BJ (cell line): ENCODE measurements at regions of chr13 and their contacts with region 1.

Region 1: GRCh38 chr13:112873851-112874750 is 94.9 kb upstream of the MCF2L start:
- DNase-seq: no peak
- H3K4me3 ChIP-seq: no peak overlapping the region
- H3K27me3 ChIP-seq: no peaks in the 10 kb centered on the region
- CTCF ChIP-seq: peak; percentile 95

Region 2: GRCh38 chr13:112606109-112607001 is 267.7 kb before region 1 on chr13:
- CTCF ChIA-PET with region 1: interaction called, 14 read pairs
- POLR2A ChIA-PET with region 1: no interaction called
- DNase-seq: peak; percentile 25
- H3K4me3 ChIP-seq: peak overlapping the region; percentile 44
- H3K27me3 ChIP-seq: peaks cover 1% of the 10 kb centered on the region; the same call in 1 of the 2 replicates
- CTCF ChIP-seq: peak; percentile 74

Region 3: GRCh38 chr13:112616586-112617362 is 257.3 kb before region 1 on chr13:
- CTCF ChIA-PET with region 1: interaction called, 30 read pairs
- POLR2A ChIA-PET with region 1: no interaction called
- DNase-seq: no peak
- H3K4me3 ChIP-seq: no peak overlapping the region
- H3K27me3 ChIP-seq: no peaks in the 10 kb centered on the region; the same call in none of the 2 replicates
- CTCF ChIP-seq: peak; percentile 69

Region 4: DNA sequence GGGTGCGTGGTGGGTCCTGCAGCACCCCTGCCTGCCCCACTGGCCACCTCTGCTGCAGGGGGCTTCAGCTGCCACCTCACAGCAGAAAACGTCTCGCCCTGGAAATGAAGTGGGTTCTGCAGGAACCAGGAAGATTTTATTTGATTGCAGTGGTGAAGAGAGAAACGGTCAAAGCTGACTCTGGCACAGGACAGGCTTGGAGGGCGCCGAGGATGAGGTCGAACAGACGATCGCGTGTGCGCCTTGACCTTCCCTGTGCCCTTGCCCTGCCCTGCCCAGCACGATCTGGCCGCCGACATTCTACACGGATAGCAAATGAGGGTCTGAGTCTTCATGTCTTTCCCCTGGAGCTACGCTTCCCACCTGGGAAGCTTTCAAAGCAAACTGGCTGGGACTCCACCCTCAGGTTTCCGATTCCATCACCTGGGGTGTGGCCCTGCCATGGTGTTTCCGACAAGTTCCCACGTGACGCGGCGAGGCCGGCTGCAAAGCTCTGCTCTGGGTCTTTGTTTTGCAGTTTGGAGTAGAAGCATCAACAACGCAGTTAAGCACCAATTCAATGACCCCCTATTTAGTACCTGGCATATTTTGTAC is 235.8 kb before region 1 on chr13:
- CTCF ChIA-PET with region 1: interaction called, 53 read pairs
- POLR2A ChIA-PET with region 1: no interaction called
- DNase-seq: no peak
- H3K4me3 ChIP-seq: no peak overlapping the region
- H3K27me3 ChIP-seq: peaks cover 11% of the 10 kb centered on the region
- CTCF ChIP-seq: no peak

Region 5: GRCh38 chr13:112652512-112653070 is 221.5 kb before region 1 on chr13:
- CTCF ChIA-PET with region 1: interaction called, 14 read pairs
- POLR2A ChIA-PET with region 1: no interaction called
- DNase-seq: no peak
- H3K4me3 ChIP-seq: no peak overlapping the region
- H3K27me3 ChIP-seq: 0 out of 2 replicates have a peak, but pooled peaks cover 2% of the 10 kb centered on the region
- CTCF ChIP-seq: no peak

Region 6: GRCh38 chr13:112767506-112768471 is 106.3 kb before region 1 on chr13:
- CTCF ChIA-PET with region 1: no interaction called
- POLR2A ChIA-PET with region 1: no interaction called
- DNase-seq: no peak
- H3K4me3 ChIP-seq: no peak overlapping the region
- H3K27me3 ChIP-seq: no peaks in the 10 kb centered on the region
- CTCF ChIP-seq: no peak

Region 7: GRCh38 chr13:112859817-112860190 is 14.3 kb before region 1 on chr13:
- CTCF ChIA-PET with region 1: interaction called, 13 read pairs
- POLR2A ChIA-PET with region 1: no interaction called
- DNase-seq: no peak
- H3K4me3 ChIP-seq: no peak overlapping the region
- H3K27me3 ChIP-seq: no peaks in the 10 kb centered on the region
- CTCF ChIP-seq: no peak

Region 8: DNA sequence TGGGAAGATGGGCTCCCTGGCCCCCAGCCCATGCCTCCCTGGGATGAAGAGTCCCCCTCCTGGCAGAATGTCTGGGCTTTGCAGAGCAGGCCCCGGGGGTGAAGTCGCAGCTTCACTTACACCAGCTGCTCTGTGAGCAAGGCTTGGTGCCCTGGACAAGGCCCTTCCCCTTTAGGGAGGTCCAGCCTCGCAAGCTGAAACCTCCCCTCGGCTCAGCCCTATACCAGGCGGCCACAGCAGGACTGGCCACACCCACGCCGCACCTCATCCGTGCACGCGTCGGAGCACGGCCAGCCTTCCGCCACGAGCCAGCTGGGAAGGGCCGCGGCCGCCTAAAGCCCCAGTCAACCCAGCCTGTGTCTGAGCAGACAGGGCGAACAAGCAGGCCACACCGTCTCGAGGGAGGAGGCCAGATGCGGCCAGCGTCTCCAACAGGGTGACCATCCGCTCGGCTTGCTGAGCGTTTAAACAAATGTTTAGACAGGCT is 11.7 kb after region 1 on chr13:
- CTCF ChIA-PET with region 1: interaction called, 13 read pairs
- POLR2A ChIA-PET with region 1: no interaction called
- DNase-seq: peak; percentile 53
- H3K4me3 ChIP-seq: peak overlapping the region; percentile 12
- H3K27me3 ChIP-seq: peaks cover 4% of the 10 kb centered on the region
- CTCF ChIP-seq: no peak